Heart right ventricle (tissue), 16 donors: ENCODE measurements at regions of chr7 and their contacts with region 1.

Region 1: DNA sequence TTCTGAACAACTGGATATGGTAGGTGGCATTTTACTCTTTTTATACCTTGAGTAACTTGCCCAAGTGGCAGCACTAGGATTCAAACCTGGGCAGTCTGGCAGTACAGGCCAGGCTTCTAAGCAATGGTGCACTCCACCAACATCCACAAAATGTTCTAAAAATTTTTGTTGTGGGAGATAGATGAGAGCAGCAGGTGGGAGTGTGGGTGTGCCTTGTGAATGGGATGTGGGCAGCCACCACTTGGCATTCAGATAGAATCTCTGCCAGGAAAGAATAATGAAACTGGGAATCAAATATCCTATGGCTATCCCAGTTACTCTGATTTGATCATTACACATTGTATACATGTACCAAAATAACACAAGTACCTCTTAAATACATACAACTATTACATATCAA is 810.7 kb downstream of the MAGI2 start:
- DNase-seq: no peak
- ATAC-seq: no peak
- H3K4me3 ChIP-seq: no peak overlapping the region
- H3K27ac ChIP-seq: no peak overlapping the region
- H3K4me1 ChIP-seq: no peaks in the 10 kb centered on the region
- H3K27me3 ChIP-seq: no peaks in the 10 kb centered on the region
- CTCF ChIP-seq: no peak

Region 2: DNA sequence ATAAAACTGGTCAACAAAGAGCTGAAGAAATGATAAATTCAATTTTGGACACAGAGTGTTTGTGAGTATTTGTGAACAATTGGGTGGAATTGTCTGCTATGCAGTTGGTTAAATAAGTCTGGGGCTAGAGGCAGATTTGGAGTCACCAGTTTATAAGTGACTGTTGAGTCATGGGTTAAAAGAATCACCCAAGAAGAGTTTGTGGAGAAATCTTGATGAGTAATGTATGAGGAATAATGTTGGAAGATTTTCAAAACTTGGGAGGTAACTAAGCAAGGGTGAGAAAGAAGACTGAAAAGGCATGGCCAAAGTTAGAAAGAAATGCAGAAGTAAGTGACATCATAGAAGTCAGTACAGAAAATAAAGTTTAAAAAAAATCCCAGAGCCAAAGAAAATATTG is 60.0 kb after region 1 on chr7:
- intact Hi-C with region 1: loop called in 1 of 10 experiments (anchors 10 kb)
- DNase-seq: no peak
- ATAC-seq: peak in 1 of 8 donors; percentile 63
- H3K4me3 ChIP-seq: no peak overlapping the region
- H3K27ac ChIP-seq: no peak overlapping the region
- H3K4me1 ChIP-seq: no peaks in the 10 kb centered on the region
- H3K27me3 ChIP-seq: no peaks in the 10 kb centered on the region
- CTCF ChIP-seq: no peak